Gastrocnemius medialis (tissue), 4 donors: ENCODE measurements at regions of chr6 and their contacts with region 1.

Region 1: GRCh38 chr6:56370561-56371211 is 123.3 kb upstream of the COL21A1 start:
- DNase-seq: no peak
- ATAC-seq: peak; percentile 55 to 71
- H3K4me3 ChIP-seq: no peak overlapping the region
- H3K27ac ChIP-seq: peak overlapping the region; percentile 53 to 64 (median 58)
- H3K4me1 ChIP-seq: peaks cover 29 to 35% of the 10 kb centered on the region in 2 donors
- H3K27me3 ChIP-seq: no peaks in the 10 kb centered on the region
- CTCF ChIP-seq: no peak
- POLR2A ChIP-seq: no peak

Region 2: DNA sequence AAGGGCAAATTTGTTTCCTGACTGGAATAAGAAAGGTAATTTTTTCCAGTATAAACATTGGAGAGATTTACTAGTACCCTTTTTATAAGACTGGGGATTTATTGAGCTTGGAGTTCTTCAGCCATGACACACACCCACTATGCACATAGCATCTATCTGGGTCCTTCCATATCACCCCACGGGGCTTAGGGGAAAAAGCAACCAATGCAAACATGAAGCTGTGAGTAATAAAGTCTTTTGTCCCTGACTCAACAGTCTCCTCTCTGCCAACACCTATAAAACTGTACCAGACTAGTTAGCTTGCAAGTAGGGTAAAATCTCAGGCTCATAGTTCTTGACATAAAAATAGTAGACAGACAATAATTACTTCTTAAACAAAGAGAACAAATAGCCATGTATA is 146.7 kb before region 1 on chr6:
- in situ Hi-C with region 1: no loop called
- intact Hi-C with region 1: no loop called
- DNase-seq: no peak
- ATAC-seq: no peak
- H3K4me3 ChIP-seq: no peak overlapping the region
- H3K27ac ChIP-seq: no peak overlapping the region
- H3K4me1 ChIP-seq: no peaks in the 10 kb centered on the region
- H3K27me3 ChIP-seq: no peaks in the 10 kb centered on the region
- CTCF ChIP-seq: no peak
- POLR2A ChIP-seq: no peak

Region 3: DNA sequence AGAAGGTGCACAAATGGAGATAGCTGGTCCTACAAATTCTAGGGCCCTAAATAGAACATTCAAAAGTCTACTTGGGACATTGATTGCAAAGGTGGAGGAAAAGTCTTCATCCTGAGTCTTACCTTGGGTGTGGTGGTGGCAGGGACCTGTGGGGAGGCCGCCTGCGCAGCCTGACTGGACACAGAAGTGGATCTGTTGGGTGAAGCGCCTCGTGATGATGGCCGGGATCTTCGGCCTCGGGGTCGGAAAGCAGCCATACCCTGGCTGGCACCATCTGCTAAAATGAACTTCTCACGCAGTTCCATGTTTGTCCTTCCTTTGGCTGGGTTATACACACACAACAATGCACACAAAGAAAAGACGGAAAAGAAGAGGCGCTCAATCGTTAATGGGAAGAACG is 92.8 kb after region 1 on chr6:
- in situ Hi-C with region 1: no loop called
- intact Hi-C with region 1: loop called (anchors 5 kb)
- DNase-seq: no peak
- ATAC-seq: no peak
- H3K4me3 ChIP-seq: no peak overlapping the region
- H3K27ac ChIP-seq: no peak overlapping the region
- H3K4me1 ChIP-seq: no peaks in the 10 kb centered on the region
- H3K27me3 ChIP-seq: no peaks in the 10 kb centered on the region
- CTCF ChIP-seq: no peak
- POLR2A ChIP-seq: no peak

Region 4: DNA sequence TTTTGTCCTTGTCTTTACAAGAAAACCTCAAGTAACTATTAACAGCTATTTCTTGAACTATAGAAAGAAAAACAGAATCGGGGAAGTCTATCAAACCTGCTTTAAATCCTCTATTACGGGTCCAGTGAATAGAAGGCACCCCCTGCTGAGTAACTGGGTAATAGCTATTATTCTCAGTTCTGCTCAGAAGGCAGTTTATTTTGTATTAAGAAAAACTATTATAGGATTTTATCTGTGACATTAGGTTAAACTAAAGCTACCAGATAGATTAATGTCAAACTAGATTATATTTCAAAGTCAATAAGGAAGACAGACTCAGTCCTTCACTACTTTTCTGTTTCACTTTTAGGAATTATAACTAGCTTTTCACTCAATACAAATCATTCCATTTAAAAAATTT is 178.3 kb after region 1 on chr6:
- in situ Hi-C with region 1: no loop called
- intact Hi-C with region 1: loop called (anchors 2 kb)
- DNase-seq: no peak
- ATAC-seq: no peak
- H3K4me3 ChIP-seq: peak overlapping the region in 1 of 4 donors; percentile 16
- H3K27ac ChIP-seq: peak overlapping the region in 3 of 4 donors; percentile 1 to 51 (median 49)
- H3K4me1 ChIP-seq: peaks cover 41 to 57% of the 10 kb centered on the region in 2 donors
- H3K27me3 ChIP-seq: no peaks in the 10 kb centered on the region
- CTCF ChIP-seq: peak in 3 of 5 experiments; percentile 24 to 39 (median 30)
- POLR2A ChIP-seq: no peak